ENCODE measurements at regions of chr6 and their contacts with region 1.

Region 1: GRCh38 chr6:152351110-152351509 is 286.1 kb downstream of the SYNE1 start:
- DNase-seq: no peak
- ATAC-seq: no peak
- H3K4me3 ChIP-seq: no peak overlapping the region
- H3K27ac ChIP-seq: no peak overlapping the region
- H3K4me1 ChIP-seq: peaks cover 5% of the 10 kb centered on the region; the same call in 2 of the 3 replicates
- CTCF ChIP-seq: no peak
- EP300 ChIP-seq: no peak
- POLR2A ChIP-seq: no peak
- RAD21 ChIP-seq: no peak

Region 2: DNA sequence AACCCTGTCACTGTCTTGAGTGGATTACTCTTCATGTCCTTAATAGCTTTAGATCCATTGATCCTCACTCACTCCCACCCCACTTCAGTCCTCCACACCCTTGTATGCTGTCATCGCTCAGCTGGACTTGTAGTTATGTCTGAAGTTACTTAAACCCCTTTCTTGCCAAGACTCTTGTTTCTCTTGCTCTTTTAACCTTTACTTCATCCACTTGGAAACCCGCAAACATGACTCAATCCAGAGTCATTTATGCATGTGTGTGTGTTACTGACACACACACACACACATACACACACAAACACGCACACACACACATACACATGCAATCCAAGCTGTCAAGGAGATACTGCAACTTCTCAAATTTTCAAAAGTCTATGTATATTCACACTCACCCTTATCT is 55.8 kb before region 1 on chr6:
- CTCF ChIA-PET with region 1: no interaction called
- POLR2A ChIA-PET with region 1: no interaction called
- DNase-seq: no peak
- ATAC-seq: no peak
- H3K4me3 ChIP-seq: no peak overlapping the region
- H3K27ac ChIP-seq: no peak overlapping the region
- H3K4me1 ChIP-seq: no peaks in the 10 kb centered on the region
- CTCF ChIP-seq: no peak
- EP300 ChIP-seq: no peak
- POLR2A ChIP-seq: no peak
- RAD21 ChIP-seq: no peak

Region 3: DNA sequence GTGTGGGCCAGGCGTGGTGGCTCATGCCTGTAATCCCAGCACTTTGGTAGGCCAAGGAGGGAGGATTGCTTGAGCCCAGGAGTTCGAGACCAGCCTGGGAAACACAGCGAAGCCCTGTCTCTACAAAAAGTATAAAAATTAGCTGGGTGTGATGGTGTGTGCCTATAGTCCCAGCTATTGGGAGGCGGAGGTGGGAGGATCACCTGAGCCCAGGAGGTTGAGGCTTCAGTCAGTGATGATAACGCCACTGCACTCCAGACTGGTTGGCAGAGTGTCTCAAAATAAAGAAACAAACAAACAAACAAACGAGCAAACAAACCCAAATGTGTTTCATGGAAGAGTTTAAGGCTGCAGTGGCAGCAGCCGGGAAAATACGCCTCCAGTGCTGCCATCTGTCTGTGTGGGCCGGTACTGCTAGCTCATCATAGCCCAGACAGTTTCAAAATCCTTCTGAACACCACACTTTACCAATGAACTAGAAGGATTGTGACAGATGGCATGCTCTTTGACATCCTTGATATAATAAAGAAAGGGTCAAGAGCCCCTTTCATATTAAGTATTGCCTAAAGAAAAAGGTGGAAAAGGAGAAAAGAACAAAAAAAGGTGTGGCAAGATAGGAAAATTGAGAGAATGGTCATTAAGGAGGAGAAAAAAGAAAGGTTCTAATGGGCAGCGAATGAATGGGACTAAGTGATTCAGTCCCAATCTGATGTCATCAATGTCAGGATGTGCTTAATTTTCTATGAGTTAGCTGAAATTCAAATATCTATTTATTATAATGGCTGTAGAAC is 12.6 kb before region 1 on chr6:
- CTCF ChIA-PET with region 1: interaction called, 13 read pairs
- POLR2A ChIA-PET with region 1: no interaction called
- DNase-seq: peak; percentile 10 to 22
- ATAC-seq: peak; percentile 71 to 85; a peak in 5 of 6 replicates
- H3K4me3 ChIP-seq: no peak overlapping the region
- H3K27ac ChIP-seq: no peak overlapping the region
- H3K4me1 ChIP-seq: no peaks in the 10 kb centered on the region
- CTCF ChIP-seq: peak; percentile 54
- EP300 ChIP-seq: no peak
- POLR2A ChIP-seq: no peak
- RAD21 ChIP-seq: peak in 1 of 2 experiments; percentile 37; a peak in 3 of 5 replicates

Measured in A549 (cell line).